ENCODE measurements at regions of chr5 and their contacts with region 1.

Region 1: GRCh38 chr5:54944364-54944763 is 41.0 kb downstream of the ESM1 start:
- DNase-seq: peak in 29 of 35 experiments; percentile 4 to 79 (median 31)
- ATAC-seq: peak in 3 of 4 experiments; percentile 55 to 56 (median 56)
- H3K4me3 ChIP-seq: no peak overlapping the region
- H3K4me3 Mint-ChIP-seq: no peak overlapping the region
- H3K27ac ChIP-seq: no peak overlapping the region
- H3K27ac Mint-ChIP-seq: no peak overlapping the region
- H3K4me1 ChIP-seq: peaks cover 0 to 5% of the 10 kb centered on the region in 2 experiments
- H3K4me1 Mint-ChIP-seq: peaks cover 2 to 5% (median 3%) of the 10 kb centered on the region in 3 donors
- H3K27me3 ChIP-seq: no peaks in the 10 kb centered on the region
- H3K27me3 Mint-ChIP-seq: no peaks in the 10 kb centered on the region

Region 2: DNA sequence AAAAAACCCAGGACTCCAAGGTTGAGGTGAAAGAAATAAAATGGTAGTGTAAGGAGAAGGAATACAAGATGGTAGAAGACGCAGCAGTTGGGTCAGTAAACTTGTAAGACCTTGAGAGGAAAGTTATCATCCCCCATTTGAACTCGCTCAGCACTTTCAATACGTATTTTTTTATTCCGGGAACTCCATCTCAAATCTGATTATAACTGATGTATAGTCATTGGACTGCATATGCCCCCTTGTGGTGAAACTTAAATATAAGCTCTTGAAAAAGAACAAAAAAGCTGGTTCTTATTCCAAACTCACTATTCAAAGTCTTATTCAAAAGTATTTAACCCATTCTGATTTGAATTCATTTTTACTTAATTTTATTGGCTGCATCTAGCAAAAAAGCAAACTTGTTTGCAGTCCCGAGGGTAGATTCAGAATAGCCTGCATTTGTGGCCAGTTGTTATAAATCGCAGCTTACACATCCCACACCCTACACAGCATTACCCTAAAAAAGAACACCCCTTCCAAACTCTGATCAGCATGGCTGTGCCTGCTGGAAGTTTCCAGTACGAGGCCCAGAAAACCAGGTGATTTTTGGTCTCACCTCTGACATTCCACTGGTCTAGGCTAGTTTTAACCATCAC is 76.9 kb before region 1 on chr5:
- CTCF ChIA-PET with region 1: interaction called in 1 of 2 experiments, 10 read pairs
- POLR2A ChIA-PET with region 1: no interaction called
- DNase-seq: peak in 4 of 35 experiments; percentile 8 to 69 (median 10)
- ATAC-seq: peak; percentile 51 to 69 (median 66)
- H3K4me3 ChIP-seq: peak overlapping the region in 1 of 2 donors; percentile 10
- H3K4me3 Mint-ChIP-seq: peak overlapping the region; percentile 13 to 35 (median 31)
- H3K27ac ChIP-seq: no peak overlapping the region
- H3K27ac Mint-ChIP-seq: no peak overlapping the region
- H3K4me1 ChIP-seq: peaks cover 0 to 2% of the 10 kb centered on the region in 2 experiments
- H3K4me1 Mint-ChIP-seq: peaks cover 8 to 9% (median 8%) of the 10 kb centered on the region in 3 donors
- H3K27me3 ChIP-seq: no peaks in the 10 kb centered on the region
- H3K27me3 Mint-ChIP-seq: peaks cover 9 to 26% of the 10 kb centered on the region in 2 donors

Region 3: DNA sequence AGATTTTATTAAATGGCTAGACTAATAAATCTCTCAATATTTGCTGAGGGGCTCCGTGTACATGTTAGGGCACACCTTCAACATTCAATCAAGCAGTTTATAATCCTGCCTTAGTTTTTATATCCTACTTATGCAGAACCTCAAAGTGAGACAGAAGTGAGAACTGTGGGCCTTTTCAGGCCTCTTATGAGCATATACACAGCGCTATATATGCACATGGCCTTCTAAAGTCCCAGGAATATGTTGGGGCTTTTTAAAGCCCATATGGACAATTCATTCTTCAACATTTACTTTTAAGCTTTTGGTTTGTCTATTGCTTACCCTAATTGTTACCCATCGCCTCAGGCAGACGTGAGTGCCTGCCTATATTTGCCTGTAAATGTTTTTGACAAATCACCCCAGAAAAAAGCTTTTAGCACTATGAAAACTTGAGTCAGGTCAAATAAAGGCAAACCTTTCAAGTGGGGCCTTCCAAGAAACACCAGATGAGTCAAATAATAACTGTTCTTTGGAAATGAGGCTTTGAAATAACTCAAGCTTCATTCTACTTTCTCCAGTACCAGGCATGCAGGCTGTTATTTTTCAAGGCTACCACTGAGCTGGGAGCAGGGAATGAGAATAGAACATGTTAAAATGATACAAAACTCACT is 17.1 kb before region 1 on chr5:
- CTCF ChIA-PET with region 1: interaction called, 8 to 10 read pairs
- POLR2A ChIA-PET with region 1: no interaction called
- DNase-seq: no peak
- ATAC-seq: no peak
- H3K4me3 ChIP-seq: no peak overlapping the region
- H3K4me3 Mint-ChIP-seq: no peak overlapping the region
- H3K27ac ChIP-seq: no peak overlapping the region
- H3K27ac Mint-ChIP-seq: no peak overlapping the region
- H3K4me1 ChIP-seq: no peaks in the 10 kb centered on the region
- H3K4me1 Mint-ChIP-seq: no peaks in the 10 kb centered on the region
- H3K27me3 ChIP-seq: no peaks in the 10 kb centered on the region
- H3K27me3 Mint-ChIP-seq: no peaks in the 10 kb centered on the region

Region 4: GRCh38 chr5:54985301-54986268 is 41.2 kb after region 1 on chr5 and contains the start of gene ESM1:
- CTCF ChIA-PET with region 1: interaction called in 1 of 2 experiments, 10 read pairs
- POLR2A ChIA-PET with region 1: no interaction called
- DNase-seq: peak in 1 of 35 experiments; percentile 2
- ATAC-seq: peak in 3 of 4 experiments; percentile 24 to 56 (median 47)
- H3K4me3 ChIP-seq: no peak within 1 kb of the TSS
- H3K4me3 Mint-ChIP-seq: peak within 1 kb of the TSS in 2 of 3 donors; percentile 37 to 51
- H3K27ac ChIP-seq: no peak within 1 kb of the TSS
- H3K27ac Mint-ChIP-seq: no peak within 1 kb of the TSS
- H3K4me1 ChIP-seq: peaks cover 5 to 27% of the 10 kb centered on the region in 2 experiments
- H3K4me1 Mint-ChIP-seq: peaks cover 33 to 61% (median 48%) of the 10 kb centered on the region in 3 donors
- H3K27me3 ChIP-seq: peaks cover 2 to 6% of the 10 kb centered on the region in 2 experiments
- H3K27me3 Mint-ChIP-seq: peaks cover 3% of the 10 kb centered on the region in 2 donors
- total RNA-seq, gene ESM1: 0.40 to 0.63 (median 0.43) TPM in 3 of 5 donors, not detected in the others

Region 5: DNA sequence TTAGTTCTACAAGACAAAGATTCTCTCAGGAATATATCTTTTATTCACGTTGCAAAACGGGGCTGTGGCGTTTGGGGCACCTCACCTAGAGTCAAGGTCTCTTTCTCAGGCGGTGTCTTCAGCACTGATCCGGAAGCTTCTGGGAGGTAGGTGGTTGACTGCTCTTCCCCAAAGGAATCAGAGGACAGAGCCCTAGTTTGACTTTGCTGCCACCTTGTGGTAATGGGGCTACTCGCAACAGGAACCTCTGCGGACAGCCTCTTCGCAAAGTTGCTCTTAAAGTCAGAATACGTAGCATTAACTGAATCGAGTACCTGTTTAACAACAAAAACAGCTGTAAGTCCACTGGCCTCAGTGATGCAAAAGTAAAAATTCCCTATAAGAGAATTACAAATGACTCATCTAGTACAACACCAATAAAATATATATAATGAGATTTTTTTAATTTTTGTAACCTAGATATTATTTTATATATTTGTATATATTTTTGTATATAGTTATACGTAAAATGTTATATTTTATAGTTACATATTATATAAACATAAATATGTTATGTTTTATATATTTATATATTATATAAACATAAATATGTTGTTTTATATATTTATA is 202.3 kb after region 1 on chr5:
- CTCF ChIA-PET with region 1: interaction called, 19 to 80 read pairs
- POLR2A ChIA-PET with region 1: no interaction called
- DNase-seq: peak; percentile 55 to 91 (median 74)
- ATAC-seq: peak; percentile 88 to 96 (median 92)
- H3K4me3 ChIP-seq: peak overlapping the region in 1 of 2 donors; percentile 27
- H3K4me3 Mint-ChIP-seq: peak overlapping the region in 1 of 3 donors; percentile 58
- H3K27ac ChIP-seq: no peak overlapping the region
- H3K27ac Mint-ChIP-seq: peak overlapping the region in 1 of 2 donors; percentile 52
- H3K4me1 ChIP-seq: peaks cover 12 to 14% of the 10 kb centered on the region in 2 experiments
- H3K4me1 Mint-ChIP-seq: peaks cover 15 to 17% (median 16%) of the 10 kb centered on the region in 3 donors
- H3K27me3 ChIP-seq: no peaks in the 10 kb centered on the region
- H3K27me3 Mint-ChIP-seq: peaks cover 8% of the 10 kb centered on the region in 2 donors

Measured in T-cell (primary cell).